HCT116 (cell line): ENCODE measurements at regions of chr3 and their contacts with region 1.

Region 1: DNA sequence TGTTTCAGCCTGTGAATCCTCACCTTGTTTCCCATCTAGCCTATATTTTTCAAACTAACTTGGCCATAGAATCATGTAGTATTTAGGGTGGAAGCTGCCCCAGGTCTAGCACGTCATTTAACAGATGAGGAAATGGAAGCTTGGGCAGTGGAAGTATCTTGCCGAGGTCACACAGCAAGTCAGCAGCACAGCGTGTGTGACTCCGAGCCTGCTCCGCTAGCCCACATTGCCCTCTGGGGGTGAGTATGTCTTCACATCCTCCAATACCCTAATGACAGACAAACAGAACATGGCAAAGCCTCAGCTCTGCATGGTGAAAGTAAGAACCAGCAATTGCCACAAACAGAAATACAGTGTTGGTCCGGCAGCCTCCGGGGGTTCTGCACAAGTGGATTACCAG is 2.2 kb upstream of the CCR5 start:
- DNase-seq: no peak
- ATAC-seq: peak; percentile 82
- H3K4me3 ChIP-seq: no peak overlapping the region
- H3K27ac ChIP-seq: no peak overlapping the region
- H3K4me1 ChIP-seq: no peaks in the 10 kb centered on the region
- H3K27me3 ChIP-seq: peaks cover 33% of the 10 kb centered on the region
- CTCF ChIP-seq: peak; percentile 36 to 40 (median 38); a peak in 4 of 6 replicates
- POLR2A ChIP-seq: no peak
- RAD21 ChIP-seq: peak; percentile 76

Region 2: DNA sequence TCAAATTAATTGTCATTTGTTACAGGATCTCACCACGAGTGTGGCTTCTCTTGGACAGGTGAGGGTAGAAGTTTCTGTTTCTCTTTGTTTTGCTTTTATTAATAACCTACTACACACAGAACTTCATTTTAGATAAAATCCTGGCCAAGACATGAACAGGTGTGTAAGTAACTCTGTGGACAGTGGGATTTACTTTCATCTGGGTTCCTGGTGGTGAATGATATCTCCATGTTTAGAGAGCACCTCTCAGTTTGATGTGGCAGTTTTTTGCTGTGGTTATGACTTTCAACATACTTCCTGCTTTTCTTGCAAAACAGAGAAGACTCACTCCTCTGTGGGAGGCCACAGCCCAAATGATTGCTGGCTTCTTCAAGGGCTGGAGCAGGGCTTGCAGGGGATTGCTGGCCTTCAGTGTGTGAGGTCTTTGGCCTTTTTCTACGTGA is 270.2 kb before region 1 on chr3:
- CTCF ChIA-PET with region 1: no interaction called
- POLR2A ChIA-PET with region 1: no interaction called
- RAD21 ChIA-PET with region 1: no interaction called
- intact Hi-C with region 1: loop called (anchors 5 kb)
- DNase-seq: no peak
- ATAC-seq: no peak
- H3K4me3 ChIP-seq: no peak overlapping the region
- H3K27ac ChIP-seq: no peak overlapping the region
- H3K4me1 ChIP-seq: peaks cover 0 to 6% of the 10 kb centered on the region in 2 experiments; a peak in 1 of 4 replicates
- H3K27me3 ChIP-seq: no peaks in the 10 kb centered on the region
- CTCF ChIP-seq: no peak
- POLR2A ChIP-seq: no peak
- RAD21 ChIP-seq: no peak

Region 3: DNA sequence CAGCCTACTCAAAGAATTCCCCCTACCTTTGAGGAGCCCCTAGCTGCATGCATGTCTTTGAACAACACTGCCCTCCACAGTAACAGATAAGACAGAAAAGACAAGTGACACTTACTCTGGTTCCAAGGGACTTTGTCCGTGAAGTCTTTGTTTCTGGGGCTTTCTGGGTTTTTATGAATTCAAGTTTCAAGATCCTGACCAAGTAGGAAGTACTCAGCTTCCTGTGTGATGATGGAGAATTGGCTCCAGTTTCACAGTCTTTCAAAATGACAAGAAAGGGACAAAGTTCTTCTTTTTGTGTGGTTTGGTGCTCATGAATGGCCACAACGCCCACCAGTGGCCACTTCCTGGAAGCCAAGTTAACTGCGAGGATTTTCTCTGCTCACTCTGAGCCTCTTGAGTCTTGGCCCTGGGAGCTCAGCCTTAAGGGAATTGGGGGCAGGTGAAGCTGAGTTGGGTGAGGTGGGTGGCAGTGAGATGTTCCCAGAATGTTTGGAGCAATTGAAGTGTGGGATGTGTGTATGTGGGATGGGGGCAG is 160.3 kb before region 1 on chr3 and contains the start of gene CCR1:
- CTCF ChIA-PET with region 1: interaction called, 17 read pairs
- POLR2A ChIA-PET with region 1: no interaction called
- RAD21 ChIA-PET with region 1: no interaction called
- intact Hi-C with region 1: no loop called
- DNase-seq: peak; percentile 45
- ATAC-seq: peak; percentile 91
- H3K4me3 ChIP-seq: no peak within 1 kb of the TSS
- H3K27ac ChIP-seq: no peak within 1 kb of the TSS
- H3K4me1 ChIP-seq: peaks cover 0 to 9% of the 10 kb centered on the region in 2 experiments; a peak in 2 of 4 replicates
- H3K27me3 ChIP-seq: 0 out of 2 replicates have a peak, but pooled peaks cover 3% of the 10 kb centered on the region
- CTCF ChIP-seq: peak; percentile 75 to 91 (median 83)
- POLR2A ChIP-seq: no peak
- RAD21 ChIP-seq: peak; percentile 88
- total RNA-seq, gene CCR1: 0.10 TPM

Region 4: GRCh38 chr3:46214751-46215352 is 153.7 kb before region 1 on chr3:
- CTCF ChIA-PET with region 1: interaction called, 17 read pairs
- POLR2A ChIA-PET with region 1: no interaction called
- RAD21 ChIA-PET with region 1: interaction called in 1 of 2 experiments, 3 read pairs
- intact Hi-C with region 1: loop called (anchors 2 kb)
- DNase-seq: no peak
- ATAC-seq: peak; percentile 76
- H3K4me3 ChIP-seq: no peak overlapping the region
- H3K27ac ChIP-seq: no peak overlapping the region
- H3K4me1 ChIP-seq: no peaks in the 10 kb centered on the region
- H3K27me3 ChIP-seq: peaks cover 8% of the 10 kb centered on the region; the same call in 1 of the 2 replicates
- CTCF ChIP-seq: peak; percentile 25 to 50 (median 47); a peak in 4 of 6 replicates
- POLR2A ChIP-seq: no peak
- RAD21 ChIP-seq: peak; percentile 48

Region 5: DNA sequence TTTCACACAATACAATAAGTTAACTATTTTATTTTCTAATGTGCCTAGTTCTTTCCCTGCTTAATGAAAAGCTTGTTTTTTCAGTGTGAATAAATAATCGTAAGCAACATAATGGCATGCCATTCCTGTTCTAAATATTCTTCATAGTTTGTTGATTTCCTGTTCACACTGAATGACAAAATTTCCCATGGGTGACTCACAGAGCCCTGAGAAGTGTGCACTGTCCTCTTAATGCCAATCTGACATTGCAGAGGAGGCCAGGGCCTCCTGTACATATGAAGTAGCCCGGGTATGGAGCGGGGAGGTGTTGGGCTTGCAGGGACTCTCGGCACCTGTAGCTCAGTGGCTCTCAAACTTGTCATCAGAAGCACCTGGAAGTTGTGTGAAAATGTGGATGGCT is 102.0 kb before region 1 on chr3:
- CTCF ChIA-PET with region 1: no interaction called
- POLR2A ChIA-PET with region 1: no interaction called
- RAD21 ChIA-PET with region 1: no interaction called
- intact Hi-C with region 1: no loop called
- DNase-seq: no peak
- ATAC-seq: no peak
- H3K4me3 ChIP-seq: no peak overlapping the region
- H3K27ac ChIP-seq: no peak overlapping the region
- H3K4me1 ChIP-seq: no peaks in the 10 kb centered on the region
- H3K27me3 ChIP-seq: no peaks in the 10 kb centered on the region
- CTCF ChIP-seq: no peak
- POLR2A ChIP-seq: no peak
- RAD21 ChIP-seq: no peak

Region 6: GRCh38 chr3:46276502-46277099 is 92.0 kb before region 1 on chr3:
- CTCF ChIA-PET with region 1: interaction called, 18 read pairs
- POLR2A ChIA-PET with region 1: no interaction called
- RAD21 ChIA-PET with region 1: interaction called in 1 of 2 experiments, 6 read pairs
- intact Hi-C with region 1: no loop called
- DNase-seq: peak; percentile 39
- ATAC-seq: peak; percentile 100
- H3K4me3 ChIP-seq: no peak overlapping the region
- H3K27ac ChIP-seq: no peak overlapping the region
- H3K4me1 ChIP-seq: peaks cover 0 to 7% of the 10 kb centered on the region in 2 experiments; a peak in 1 of 4 replicates
- H3K27me3 ChIP-seq: no peaks in the 10 kb centered on the region
- CTCF ChIP-seq: peak; percentile 60 to 87 (median 81); a peak in 5 of 6 replicates
- POLR2A ChIP-seq: no peak
- RAD21 ChIP-seq: peak; percentile 59